Activated CD8-positive, alpha-beta T cell treated with anti-CD3 and anti-CD28 coated beads for 36 hours (primary cell): ENCODE measurements at regions of chr19 and their contacts with region 1.

Region 1: DNA sequence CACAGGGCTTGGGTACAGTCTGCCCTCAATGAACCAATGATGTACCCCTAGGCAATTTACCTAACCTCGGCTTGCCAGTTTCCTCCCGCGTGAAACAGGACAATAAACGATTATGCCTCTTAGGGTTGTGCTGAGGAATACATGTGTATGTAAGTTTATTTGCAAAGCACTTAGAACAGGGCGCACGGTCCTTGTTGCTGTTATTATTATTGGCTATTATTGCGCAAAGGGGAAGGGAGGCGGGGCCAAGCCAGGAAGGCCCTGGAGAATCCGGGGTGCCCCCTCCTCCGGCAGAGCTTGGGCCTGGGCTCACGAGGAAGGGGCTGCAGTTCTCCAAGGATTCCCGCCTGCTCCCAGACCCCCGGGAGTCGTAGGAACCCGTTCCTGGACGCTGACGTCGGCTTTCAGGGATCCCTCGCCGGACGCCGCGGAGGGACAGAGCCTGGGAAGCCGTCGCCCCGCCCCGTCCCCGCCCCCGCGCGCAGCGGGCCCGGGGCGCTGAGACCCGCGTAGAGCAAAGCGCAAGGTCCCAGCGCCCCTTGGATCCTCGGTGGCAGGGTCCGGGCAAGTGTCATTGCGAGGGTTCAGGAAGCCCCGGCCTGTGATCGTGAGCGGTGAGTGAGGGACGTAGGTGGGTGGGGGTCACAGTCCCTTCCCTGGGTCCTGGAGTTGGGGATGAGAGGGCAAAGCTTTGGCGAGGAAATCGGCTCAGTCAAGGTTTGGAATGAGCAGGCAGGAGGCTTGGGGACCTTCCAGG is at the start of gene TMEM91:
- DNase-seq: no peak
- ATAC-seq: peak; percentile 28
- H3K4me3 Mint-ChIP-seq: peak within 1 kb of the TSS; percentile 60
- H3K27ac Mint-ChIP-seq: peak within 1 kb of the TSS; percentile 20
- H3K4me1 Mint-ChIP-seq: peaks cover 22% of the 10 kb centered on the region
- H3K27me3 Mint-ChIP-seq: no peaks in the 10 kb centered on the region
- CTCF ChIP-seq: no peak
- total RNA-seq, gene TMEM91: 8.9 to 9.1 TPM

Region 2: DNA sequence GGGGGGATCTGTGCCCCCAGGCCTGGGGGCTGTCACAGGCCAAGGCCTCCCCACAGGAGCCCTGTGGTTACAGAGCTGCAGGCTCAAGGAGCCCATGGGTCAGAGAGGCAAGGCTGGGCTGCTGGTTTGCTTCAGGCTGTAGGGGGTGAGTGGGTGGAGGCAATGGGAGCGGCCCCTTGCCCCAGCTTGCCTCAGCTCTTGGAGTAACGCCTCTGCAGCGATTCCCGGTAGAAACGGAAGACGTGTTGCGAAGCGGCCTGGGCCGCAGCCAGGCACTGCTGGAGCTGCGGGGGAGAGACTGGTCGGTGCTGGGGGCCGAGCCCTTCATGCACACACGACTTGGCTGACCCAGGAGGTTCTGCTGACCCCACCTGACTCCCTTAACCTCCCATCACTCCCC is 10.0 kb after region 1 on chr19:
- CTCF ChIA-PET with region 1: no interaction called
- POLR2A ChIA-PET with region 1: interaction called, 11 read pairs
- intact Hi-C with region 1: no loop called
- DNase-seq: no peak
- ATAC-seq: no peak
- H3K4me3 Mint-ChIP-seq: no peak overlapping the region
- H3K27ac Mint-ChIP-seq: no peak overlapping the region
- H3K4me1 Mint-ChIP-seq: no peaks in the 10 kb centered on the region
- H3K27me3 Mint-ChIP-seq: no peaks in the 10 kb centered on the region
- CTCF ChIP-seq: no peak

Region 3: DNA sequence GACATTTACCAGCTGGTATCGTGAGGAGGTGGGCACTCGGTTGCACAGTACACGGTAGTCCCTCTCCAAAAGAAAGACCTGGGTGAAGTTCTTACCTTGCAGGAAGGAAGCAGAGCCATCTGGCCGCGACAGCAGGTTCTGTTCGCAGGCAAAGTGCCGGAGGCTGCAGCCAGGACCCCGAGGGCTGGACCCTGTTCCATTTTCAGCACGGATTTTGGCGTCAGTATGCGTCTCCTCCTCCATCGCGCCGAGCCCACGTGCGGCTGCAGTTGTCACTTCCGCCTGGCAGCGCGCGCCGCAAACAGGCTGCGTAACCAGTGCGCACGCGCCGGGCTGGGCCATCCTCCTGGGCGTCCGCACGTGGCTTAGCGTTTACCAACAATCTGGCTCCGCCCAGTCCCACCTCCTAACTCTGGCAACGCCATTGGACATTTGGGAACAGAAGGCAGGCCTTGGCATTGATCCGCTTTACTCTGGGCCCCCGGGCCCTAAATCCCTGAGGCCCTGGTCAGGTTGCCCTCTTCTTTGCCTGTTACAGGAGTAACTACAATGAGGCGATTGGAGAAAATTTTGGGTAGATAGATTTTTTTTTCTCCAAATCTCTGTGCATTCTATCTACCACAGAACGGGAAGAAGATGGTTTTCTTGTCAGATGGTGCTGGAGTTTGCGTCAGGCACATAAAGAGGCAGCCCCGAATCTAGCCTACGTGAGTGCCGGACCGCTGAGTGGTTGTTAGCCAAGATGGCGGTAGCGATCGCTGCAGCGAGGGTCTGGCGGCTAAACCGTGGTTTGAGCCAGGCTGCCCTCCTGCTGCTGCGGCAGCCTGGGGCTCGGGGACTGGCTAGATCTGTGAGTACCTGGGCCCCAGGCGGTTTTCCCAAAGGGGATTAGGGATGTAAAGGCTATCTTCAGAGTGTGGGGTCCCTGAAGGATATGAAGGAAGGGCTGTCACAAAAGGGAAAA is 20.9 kb after region 1 on chr19 and contains the starts of genes BCKDHA and EXOSC5:
- CTCF ChIA-PET with region 1: no interaction called
- POLR2A ChIA-PET with region 1: no interaction called
- intact Hi-C with region 1: no loop called
- DNase-seq: peak; percentile 99
- ATAC-seq: peak; percentile 99
- H3K4me3 Mint-ChIP-seq: peak within 1 kb of the TSS; percentile 96
- H3K27ac Mint-ChIP-seq: peak within 1 kb of the TSS; percentile 99
- H3K4me1 Mint-ChIP-seq: peaks cover 38% of the 10 kb centered on the region
- H3K27me3 Mint-ChIP-seq: no peaks in the 10 kb centered on the region
- CTCF ChIP-seq: no peak
- total RNA-seq, gene BCKDHA: 32.3 to 36.9 TPM
- total RNA-seq, gene EXOSC5: 46.6 to 47.0 TPM